Naive thymus-derived CD4-positive, alpha-beta T cell (primary cell): ENCODE measurements at regions of chr15 and their contacts with region 1.

Region 1: DNA sequence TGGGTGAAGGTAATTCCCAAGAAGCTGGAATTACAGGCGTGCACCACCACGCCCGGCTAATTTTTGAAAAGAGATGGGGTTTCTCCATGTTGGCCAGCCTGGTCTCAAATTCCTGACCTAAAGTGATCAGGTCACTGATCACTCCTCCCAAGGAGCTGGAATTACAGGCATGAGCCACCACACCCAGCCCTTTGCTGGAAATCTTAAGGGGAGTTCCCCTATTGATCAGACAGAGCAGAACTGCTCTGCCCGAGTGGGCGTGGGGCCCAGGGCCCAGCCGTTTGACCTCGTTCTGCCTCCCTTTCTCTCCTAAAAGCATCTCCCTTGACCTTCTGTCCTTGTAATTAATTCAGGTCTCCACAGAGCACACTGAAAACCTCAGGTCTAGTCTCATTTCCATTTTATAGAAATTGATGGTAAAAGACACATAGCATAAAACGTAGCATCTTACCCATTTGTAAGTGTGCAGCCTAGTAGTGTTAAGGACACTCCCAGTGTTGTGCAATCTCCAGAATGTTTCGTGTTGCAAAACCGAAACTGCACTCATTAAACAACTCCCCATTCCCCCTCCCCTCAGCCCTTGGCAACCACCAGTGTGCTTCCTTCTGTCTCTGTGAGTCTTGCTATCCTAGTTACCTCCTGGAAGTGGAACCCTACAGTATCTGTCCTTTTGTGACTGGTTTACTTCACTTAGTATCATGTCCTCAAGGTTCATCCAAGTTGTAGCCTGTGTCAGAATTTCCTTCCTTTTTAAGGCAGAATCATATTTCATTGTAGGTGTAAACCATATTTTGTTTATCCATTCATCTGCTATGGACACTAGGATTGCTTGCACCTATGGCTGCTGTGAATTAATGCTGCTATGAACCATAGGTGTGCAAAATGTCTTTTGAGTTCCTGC is 89.4 kb downstream of the SLCO3A1 start:
- DNase-seq: peak in 5 of 9 donors; percentile 6 to 32 (median 24)
- ATAC-seq: peak; percentile 82
- H3K4me3 ChIP-seq: no peak overlapping the region
- H3K4me3 Mint-ChIP-seq: peak overlapping the region in 7 of 10 donors; percentile 8 to 81 (median 42)
- H3K27ac ChIP-seq: no peak overlapping the region
- H3K27ac Mint-ChIP-seq: peak overlapping the region in 5 of 9 donors; percentile 23 to 87 (median 67)
- H3K4me1 ChIP-seq: peaks cover 0 to 11% of the 10 kb centered on the region in 2 donors
- H3K4me1 Mint-ChIP-seq: peaks cover 10 to 81% (median 57%) of the 10 kb centered on the region in 7 donors
- H3K27me3 ChIP-seq: no peaks in the 10 kb centered on the region
- H3K27me3 Mint-ChIP-seq: peaks cover 0 to 6% (median 0%) of the 10 kb centered on the region in 5 donors

Region 2: GRCh38 chr15:91706322-91707032 is 236.4 kb before region 1 on chr15:
- CTCF ChIA-PET with region 1: interaction called, 59 read pairs
- POLR2A ChIA-PET with region 1: interaction called, 3 read pairs
- intact Hi-C with region 1: loop called (anchors 1 kb)
- DNase-seq: peak; percentile 58 to 84 (median 77)
- ATAC-seq: peak; percentile 98
- H3K4me3 ChIP-seq: no peak overlapping the region
- H3K4me3 Mint-ChIP-seq: peak overlapping the region in 9 of 10 donors; percentile 48 to 77 (median 62)
- H3K27ac ChIP-seq: no peak overlapping the region
- H3K27ac Mint-ChIP-seq: peak overlapping the region in 7 of 9 donors; percentile 37 to 88 (median 75)
- H3K4me1 ChIP-seq: peaks cover 10 to 13% of the 10 kb centered on the region in 2 donors
- H3K4me1 Mint-ChIP-seq: peaks cover 11 to 24% (median 20%) of the 10 kb centered on the region in 7 donors
- H3K27me3 ChIP-seq: no peaks in the 10 kb centered on the region
- H3K27me3 Mint-ChIP-seq: peaks cover 0 to 27% (median 4%) of the 10 kb centered on the region in 5 donors

Region 3: DNA sequence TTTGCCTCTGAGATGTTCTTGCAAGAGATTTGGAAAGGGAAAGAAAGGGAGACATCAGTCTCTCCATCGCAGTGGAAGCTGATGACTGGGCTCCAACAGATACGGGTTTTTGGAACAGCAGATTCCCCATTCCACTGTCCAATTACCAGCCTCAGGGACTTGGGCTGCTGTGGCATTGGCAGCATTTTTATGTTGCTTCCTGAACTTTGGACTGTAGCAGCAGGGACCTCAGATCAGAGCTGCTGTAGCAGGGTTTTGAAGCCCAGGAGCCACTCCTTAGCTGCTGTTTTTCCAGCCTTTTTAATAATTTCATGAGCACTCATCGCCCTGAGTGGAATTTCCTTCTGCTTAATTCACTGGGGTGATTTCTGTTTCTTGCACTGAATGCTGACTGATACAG is 225.1 kb before region 1 on chr15:
- CTCF ChIA-PET with region 1: no interaction called
- POLR2A ChIA-PET with region 1: no interaction called
- intact Hi-C with region 1: no loop called
- DNase-seq: no peak
- ATAC-seq: no peak
- H3K4me3 ChIP-seq: no peak overlapping the region
- H3K4me3 Mint-ChIP-seq: no peak overlapping the region
- H3K27ac ChIP-seq: no peak overlapping the region
- H3K27ac Mint-ChIP-seq: peak overlapping the region in 1 of 9 donors; percentile 1
- H3K4me1 ChIP-seq: no peaks in the 10 kb centered on the region
- H3K4me1 Mint-ChIP-seq: no peaks in the 10 kb centered on the region
- H3K27me3 ChIP-seq: no peaks in the 10 kb centered on the region
- H3K27me3 Mint-ChIP-seq: peaks cover 12 to 57% (median 27%) of the 10 kb centered on the region in 5 donors

Region 4: DNA sequence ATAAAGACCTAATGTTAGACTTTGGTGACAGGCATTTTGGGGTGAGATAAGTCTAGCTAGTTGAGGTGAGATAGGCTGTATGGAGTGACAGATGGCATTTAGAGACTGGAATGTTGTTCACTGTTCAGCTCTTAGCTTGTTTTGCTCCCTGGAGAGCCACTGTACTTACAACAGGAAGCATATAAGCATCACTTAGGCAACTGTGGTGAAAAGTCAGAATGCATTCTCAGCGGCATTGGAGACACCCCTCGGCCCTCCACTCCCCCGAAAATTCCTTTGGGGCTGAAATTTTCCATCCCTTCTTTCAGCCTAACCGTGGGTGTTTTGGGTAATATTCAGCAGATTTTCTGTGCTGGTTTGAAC is 16.0 kb before region 1 on chr15:
- CTCF ChIA-PET with region 1: interaction called, 3 read pairs
- POLR2A ChIA-PET with region 1: interaction called, 6 read pairs
- intact Hi-C with region 1: loop called in 1 of 2 experiments (anchors 2 kb)
- DNase-seq: no peak
- ATAC-seq: no peak
- H3K4me3 ChIP-seq: no peak overlapping the region
- H3K4me3 Mint-ChIP-seq: no peak overlapping the region
- H3K27ac ChIP-seq: no peak overlapping the region
- H3K27ac Mint-ChIP-seq: no peak overlapping the region
- H3K4me1 ChIP-seq: peaks cover 0 to under 1% of the 10 kb centered on the region in 2 donors
- H3K4me1 Mint-ChIP-seq: peaks cover 14 to 61% (median 37%) of the 10 kb centered on the region in 7 donors
- H3K27me3 ChIP-seq: no peaks in the 10 kb centered on the region
- H3K27me3 Mint-ChIP-seq: no peaks in the 10 kb centered on the region

Region 5: GRCh38 chr15:92077353-92078085 is 134.6 kb after region 1 on chr15:
- CTCF ChIA-PET with region 1: no interaction called
- POLR2A ChIA-PET with region 1: no interaction called
- intact Hi-C with region 1: loop called in 1 of 2 experiments (anchors 10 kb)
- DNase-seq: peak; percentile 11 to 58 (median 37)
- ATAC-seq: peak; percentile 71
- H3K4me3 ChIP-seq: no peak overlapping the region
- H3K4me3 Mint-ChIP-seq: no peak overlapping the region
- H3K27ac ChIP-seq: no peak overlapping the region
- H3K27ac Mint-ChIP-seq: no peak overlapping the region
- H3K4me1 ChIP-seq: peaks cover 3 to 4% of the 10 kb centered on the region in 2 donors
- H3K4me1 Mint-ChIP-seq: peaks cover 4 to 42% (median 28%) of the 10 kb centered on the region in 7 donors
- H3K27me3 ChIP-seq: no peaks in the 10 kb centered on the region
- H3K27me3 Mint-ChIP-seq: no peaks in the 10 kb centered on the region